ENCODE measurements at regions of chr2 and their contacts with region 1.

Region 1: GRCh38 chr2:222903234-222904220 is 42.7 kb downstream of the ACSL3 start:
- DNase-seq: peak; percentile 71
- H3K4me3 ChIP-seq: no peak overlapping the region
- H3K27ac ChIP-seq: no peak overlapping the region
- H3K4me1 ChIP-seq: peaks cover 6% of the 10 kb centered on the region
- H3K27me3 ChIP-seq: no peaks in the 10 kb centered on the region
- CTCF ChIP-seq: peak; percentile 42 to 44
- POLR2A ChIP-seq: no peak

Region 2: GRCh38 chr2:222698276-222698675 is 205.3 kb before region 1 on chr2:
- CTCF ChIA-PET with region 1: interaction called, 195 read pairs
- POLR2A ChIA-PET with region 1: no interaction called
- dilution Hi-C with region 1: no loop called
- intact Hi-C with region 1: loop called (anchors 1 kb)
- DNase-seq: peak; percentile 45
- H3K4me3 ChIP-seq: no peak overlapping the region
- H3K27ac ChIP-seq: peak overlapping the region; percentile 71
- H3K4me1 ChIP-seq: peaks cover 40% of the 10 kb centered on the region
- H3K27me3 ChIP-seq: no peaks in the 10 kb centered on the region
- CTCF ChIP-seq: no peak
- POLR2A ChIP-seq: peak; percentile 3

Region 3: GRCh38 chr2:222743251-222743812 is 160.2 kb before region 1 on chr2:
- CTCF ChIA-PET with region 1: interaction called, 6 read pairs
- POLR2A ChIA-PET with region 1: no interaction called
- dilution Hi-C with region 1: no loop called
- intact Hi-C with region 1: loop called (anchors 1 kb)
- DNase-seq: peak; percentile 81
- H3K4me3 ChIP-seq: peak overlapping the region in 1 of 3 experiments; percentile 21
- H3K27ac ChIP-seq: peak overlapping the region; percentile 37
- H3K4me1 ChIP-seq: peaks cover 10% of the 10 kb centered on the region
- H3K27me3 ChIP-seq: no peaks in the 10 kb centered on the region
- CTCF ChIP-seq: no peak
- POLR2A ChIP-seq: no peak

Region 4: DNA sequence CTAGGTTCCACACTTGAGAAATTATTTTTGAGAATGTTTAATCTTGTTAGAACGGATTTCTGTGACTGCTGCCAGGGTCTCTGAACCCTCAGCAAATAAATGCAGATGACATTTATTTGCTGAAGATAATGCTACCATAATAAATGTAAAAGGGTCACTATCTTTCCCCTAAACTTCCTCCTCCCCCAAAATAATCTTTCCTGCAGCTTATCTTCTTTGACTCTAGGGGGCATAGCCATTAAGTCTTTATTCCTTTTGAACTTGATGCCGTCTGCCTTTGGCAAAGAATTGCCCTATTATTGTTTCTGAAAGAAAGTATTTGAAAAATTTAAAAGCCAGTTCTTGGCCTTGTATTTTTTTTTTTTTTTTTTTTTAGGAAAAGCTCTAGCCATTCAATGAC is 106.3 kb before region 1 on chr2:
- CTCF ChIA-PET with region 1: interaction called, 35 read pairs
- POLR2A ChIA-PET with region 1: no interaction called
- dilution Hi-C with region 1: no loop called
- intact Hi-C with region 1: loop called (anchors 1 kb)
- DNase-seq: peak; percentile 48
- H3K4me3 ChIP-seq: no peak overlapping the region
- H3K27ac ChIP-seq: no peak overlapping the region
- H3K4me1 ChIP-seq: peaks cover 2% of the 10 kb centered on the region
- H3K27me3 ChIP-seq: peaks cover 0 to 2% of the 10 kb centered on the region in 2 experiments
- CTCF ChIP-seq: peak; percentile 30 to 43
- POLR2A ChIP-seq: no peak

Region 5: DNA sequence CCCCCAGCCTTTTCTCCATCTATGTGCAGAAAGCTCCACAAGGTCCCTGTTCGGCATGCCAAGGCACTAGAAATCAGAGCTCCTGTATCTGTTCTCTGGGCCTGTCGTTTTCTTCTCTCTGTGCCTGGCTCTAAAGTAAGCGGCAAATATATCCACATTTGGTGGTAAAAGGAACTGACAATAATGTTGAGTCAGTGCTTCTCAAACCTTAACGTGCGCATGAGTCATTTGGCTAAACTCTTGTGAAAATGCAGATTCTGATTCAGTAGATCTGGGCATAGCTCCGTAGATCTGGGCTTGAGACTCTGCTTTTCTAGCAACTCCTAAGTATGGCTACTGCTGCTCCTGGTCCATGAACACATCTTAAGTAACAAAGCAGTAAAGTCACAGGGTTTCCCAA is 59.2 kb before region 1 on chr2:
- CTCF ChIA-PET with region 1: interaction called, 29 read pairs
- POLR2A ChIA-PET with region 1: interaction called, 4 read pairs
- dilution Hi-C with region 1: no loop called
- intact Hi-C with region 1: loop called (anchors 2 kb)
- DNase-seq: peak; percentile 55
- H3K4me3 ChIP-seq: no peak overlapping the region
- H3K27ac ChIP-seq: no peak overlapping the region
- H3K4me1 ChIP-seq: peaks cover 22% of the 10 kb centered on the region
- H3K27me3 ChIP-seq: no peaks in the 10 kb centered on the region
- CTCF ChIP-seq: no peak
- POLR2A ChIP-seq: no peak

Region 6: DNA sequence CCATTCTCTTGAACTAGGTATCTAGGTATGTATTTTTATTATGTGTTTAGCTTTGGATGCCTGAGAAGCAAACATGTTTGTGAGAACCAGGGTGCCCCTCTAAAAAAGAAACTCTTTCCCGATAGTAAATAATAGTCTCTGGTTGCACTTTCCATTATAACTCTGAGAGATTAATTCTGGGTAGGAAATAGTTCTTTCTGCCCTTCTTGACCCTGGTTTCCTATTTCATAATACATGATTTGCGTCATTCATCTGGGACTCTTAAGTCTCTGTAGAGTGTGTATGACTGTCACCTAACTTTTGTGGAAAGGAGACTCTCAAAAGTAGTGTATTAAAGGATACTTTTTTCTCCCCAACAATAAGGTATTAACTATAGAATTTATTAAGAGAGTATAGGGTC is 11.2 kb before region 1 on chr2:
- CTCF ChIA-PET with region 1: interaction called, 29 read pairs
- POLR2A ChIA-PET with region 1: no interaction called
- dilution Hi-C with region 1: no loop called
- intact Hi-C with region 1: no loop called
- DNase-seq: peak; percentile 88
- H3K4me3 ChIP-seq: peak overlapping the region in 1 of 3 experiments; percentile 50
- H3K27ac ChIP-seq: peak overlapping the region; percentile 46
- H3K4me1 ChIP-seq: peaks cover 39% of the 10 kb centered on the region
- H3K27me3 ChIP-seq: no peaks in the 10 kb centered on the region
- CTCF ChIP-seq: no peak
- POLR2A ChIP-seq: no peak

Measured in endothelial cell of umbilical vein (primary cell).